MCF 10A (cell line): ENCODE measurements at regions of chr1 and their contacts with region 1.

Region 1: DNA sequence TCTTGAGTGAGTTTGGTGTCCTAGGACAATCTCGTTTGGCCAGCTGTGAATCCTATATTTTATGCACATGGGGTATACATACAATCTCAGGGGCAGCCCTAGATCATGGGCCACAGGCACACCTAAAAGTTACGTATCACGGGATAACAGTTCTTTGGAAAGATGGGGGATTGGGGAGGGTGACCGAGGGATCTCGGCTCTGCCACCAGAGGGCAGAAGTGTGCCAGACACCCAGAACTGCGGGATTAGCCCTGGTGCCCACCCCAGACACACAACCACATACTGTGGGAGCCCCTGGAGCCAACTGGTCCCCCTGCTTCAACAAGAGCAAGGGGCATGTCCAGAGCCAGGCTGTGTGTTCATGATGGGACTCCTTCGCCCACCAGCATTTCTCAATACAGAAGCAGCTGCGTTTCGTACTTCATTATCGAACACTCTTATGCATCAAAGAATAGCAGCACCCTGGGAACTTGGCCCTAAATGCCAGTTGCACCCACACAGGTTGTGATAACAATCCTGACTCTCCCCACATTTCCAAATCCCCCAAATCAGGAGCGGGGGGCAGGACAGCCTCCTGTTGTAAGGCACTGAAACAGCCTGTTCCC is 37.4 kb downstream of the TMCO4 start:
- DNase-seq: peak; percentile 44
- H3K4me3 Mint-ChIP-seq: no peak overlapping the region
- H3K27ac Mint-ChIP-seq: no peak overlapping the region
- H3K4me1 Mint-ChIP-seq: peaks cover 20% of the 10 kb centered on the region
- H3K27me3 Mint-ChIP-seq: no peaks in the 10 kb centered on the region
- CTCF ChIP-seq: peak; percentile 69

Region 2: GRCh38 chr1:19750101-19750881 is 12.0 kb before region 1 on chr1:
- CTCF ChIA-PET with region 1: interaction called, 13 read pairs
- POLR2A ChIA-PET with region 1: no interaction called
- intact Hi-C with region 1: no loop called
- DNase-seq: peak; percentile 47
- H3K4me3 Mint-ChIP-seq: no peak overlapping the region
- H3K27ac Mint-ChIP-seq: no peak overlapping the region
- H3K4me1 Mint-ChIP-seq: peaks cover 5% of the 10 kb centered on the region
- H3K27me3 Mint-ChIP-seq: no peaks in the 10 kb centered on the region
- CTCF ChIP-seq: no peak

Region 3: DNA sequence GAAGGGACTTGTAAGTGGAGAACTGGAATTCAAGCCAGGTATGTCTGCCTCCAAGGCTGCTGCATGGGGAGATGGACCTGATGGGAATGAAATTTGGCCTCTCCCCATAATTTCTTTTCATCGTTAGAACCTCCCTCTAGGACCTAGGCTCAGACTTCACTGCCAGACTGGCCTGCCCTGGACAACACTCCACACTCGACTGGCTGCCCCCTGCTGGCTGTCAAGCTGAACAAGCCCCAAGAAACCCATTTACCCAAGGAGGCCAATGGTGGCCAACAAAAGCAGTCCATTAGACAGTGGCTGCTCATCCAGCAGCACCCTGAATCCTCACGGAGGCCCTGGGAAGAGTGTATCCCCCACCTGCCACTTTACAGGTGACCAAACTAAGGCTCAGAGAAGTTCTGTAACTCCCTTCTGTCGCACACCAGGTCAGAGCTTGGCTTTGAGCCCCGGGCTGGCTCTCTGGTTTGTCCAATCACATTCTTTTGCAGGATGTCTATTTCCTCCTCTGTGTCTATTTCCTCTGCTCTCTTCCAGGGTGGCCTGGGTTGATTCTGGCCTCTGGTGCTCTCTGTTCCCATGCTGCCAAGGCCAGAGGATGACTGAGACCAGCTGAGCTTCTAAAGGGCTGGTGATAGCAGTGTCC is 49.1 kb after region 1 on chr1:
- CTCF ChIA-PET with region 1: no interaction called
- POLR2A ChIA-PET with region 1: no interaction called
- intact Hi-C with region 1: loop called (anchors 1 kb)
- DNase-seq: peak; percentile 61
- H3K4me3 Mint-ChIP-seq: no peak overlapping the region
- H3K27ac Mint-ChIP-seq: no peak overlapping the region
- H3K4me1 Mint-ChIP-seq: peaks cover 5% of the 10 kb centered on the region
- H3K27me3 Mint-ChIP-seq: peaks cover 11% of the 10 kb centered on the region
- CTCF ChIP-seq: peak; percentile 52

Region 4: DNA sequence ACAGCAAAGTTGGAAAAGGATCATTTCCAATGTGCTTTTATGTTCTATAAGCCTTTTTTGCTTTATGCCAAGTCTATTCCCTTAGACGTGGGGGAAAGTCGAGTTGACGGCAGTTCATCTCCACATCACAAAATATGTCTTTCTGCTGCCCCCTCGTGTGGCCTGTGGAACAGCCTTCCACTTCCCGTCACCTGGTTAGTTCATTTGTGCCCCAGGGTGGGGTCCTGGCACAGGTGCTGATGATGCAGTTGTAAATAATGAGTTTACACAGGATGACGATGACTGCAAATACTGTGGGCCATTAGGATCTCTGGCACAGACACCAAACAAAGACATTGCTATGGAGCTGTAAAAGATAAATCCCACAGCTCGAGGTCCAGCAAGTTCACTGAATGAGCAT is 109.9 kb after region 1 on chr1:
- CTCF ChIA-PET with region 1: no interaction called
- POLR2A ChIA-PET with region 1: no interaction called
- intact Hi-C with region 1: loop called (anchors 5 kb)
- DNase-seq: peak; percentile 42
- H3K4me3 Mint-ChIP-seq: no peak overlapping the region
- H3K27ac Mint-ChIP-seq: peak overlapping the region; percentile 84
- H3K4me1 Mint-ChIP-seq: peaks cover 8% of the 10 kb centered on the region
- H3K27me3 Mint-ChIP-seq: peaks cover 11% of the 10 kb centered on the region
- CTCF ChIP-seq: no peak

Region 5: DNA sequence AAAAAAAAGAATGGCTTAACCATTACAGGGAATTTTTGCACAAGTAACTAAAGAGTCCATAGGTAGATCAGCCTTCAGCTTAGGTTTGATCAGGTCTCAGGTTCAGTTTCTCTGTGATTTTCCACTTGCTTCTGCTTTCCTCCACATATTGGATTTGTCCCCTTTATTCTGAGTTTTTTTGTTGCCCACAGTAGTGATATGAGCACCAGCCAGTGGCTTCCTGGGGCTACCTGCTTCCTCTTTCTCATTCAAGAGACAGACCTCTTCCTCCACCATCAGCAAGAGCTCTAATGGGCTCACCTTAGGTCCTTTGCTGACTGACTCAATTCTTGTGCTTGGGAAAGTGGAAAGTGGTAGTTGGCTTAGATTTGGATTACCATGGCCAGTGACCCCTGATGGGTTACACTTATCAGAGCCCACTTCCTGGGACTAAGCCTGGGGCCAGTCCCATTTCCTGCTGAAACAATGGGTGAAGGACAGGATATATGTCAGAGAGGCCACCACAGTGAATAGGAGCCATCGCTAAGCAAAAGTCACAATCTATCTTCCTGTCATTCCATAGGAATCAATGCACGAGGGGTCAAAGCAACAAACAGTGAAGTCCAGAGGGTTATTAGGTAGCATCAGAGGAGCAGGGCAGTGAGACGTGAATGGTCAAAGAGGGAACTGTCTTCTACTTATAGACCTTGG is 173.9 kb after region 1 on chr1:
- CTCF ChIA-PET with region 1: no interaction called
- POLR2A ChIA-PET with region 1: no interaction called
- intact Hi-C with region 1: no loop called
- DNase-seq: no peak
- H3K4me3 Mint-ChIP-seq: no peak overlapping the region
- H3K27ac Mint-ChIP-seq: no peak overlapping the region
- H3K4me1 Mint-ChIP-seq: no peaks in the 10 kb centered on the region
- H3K27me3 Mint-ChIP-seq: no peaks in the 10 kb centered on the region
- CTCF ChIP-seq: no peak